H1 (cell line): ENCODE measurements at regions of chr3 and their contacts with region 1.

Region 1: DNA sequence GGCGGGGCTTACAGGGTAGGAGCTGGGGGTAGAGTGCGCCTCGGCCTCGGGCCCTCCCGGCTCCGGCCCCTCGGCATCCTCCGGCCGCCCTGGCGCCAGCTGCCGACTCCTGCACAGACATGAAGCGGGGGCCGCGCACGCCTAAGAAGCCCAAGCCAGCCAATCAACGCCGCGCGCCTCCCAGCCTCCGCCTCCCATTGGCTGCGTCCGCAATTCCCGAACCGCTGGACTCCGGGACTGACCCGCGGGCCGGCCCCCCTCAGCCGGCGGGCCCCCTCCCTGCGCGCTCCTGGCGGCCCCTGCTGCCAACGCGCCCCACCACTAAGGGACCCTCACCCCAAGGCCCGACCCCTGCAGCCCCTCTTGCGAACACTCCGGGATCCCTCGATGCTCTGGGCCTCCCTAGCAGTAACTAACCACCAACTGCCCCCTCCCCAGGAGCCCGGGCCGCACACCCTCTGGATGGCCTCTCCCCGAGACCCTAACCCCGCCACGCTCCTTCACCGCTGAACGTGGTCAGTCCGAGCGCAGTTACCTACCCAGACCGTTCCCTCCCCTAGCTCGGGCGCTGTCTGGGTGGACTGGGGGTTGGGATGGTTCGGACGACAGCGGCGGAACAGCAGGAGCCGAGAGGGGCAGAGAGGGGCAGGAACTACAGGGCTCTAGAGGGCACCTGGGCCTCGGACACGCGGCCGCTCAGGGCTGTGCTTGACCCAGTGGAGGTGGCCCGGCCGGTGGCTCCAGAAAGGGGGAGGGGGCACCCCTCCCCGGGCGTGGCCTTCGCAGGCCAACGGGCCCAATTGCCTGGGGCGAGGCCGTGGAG is 5.0 kb downstream of the GATA2 start:
- DNase-seq: peak; percentile 62 to 93
- H3K4me3 ChIP-seq: peak overlapping the region; percentile 28 to 63 (median 32); a peak in 6 of 8 replicates
- H3K27ac ChIP-seq: no peak overlapping the region
- H3K4me1 ChIP-seq: peaks cover 5 to 83% (median 55%) of the 10 kb centered on the region in 4 experiments
- H3K27me3 ChIP-seq: peaks cover 89 to 100% (median 99%) of the 10 kb centered on the region in 4 experiments
- CTCF ChIP-seq: no peak
- EP300 ChIP-seq: no peak
- POLR2A ChIP-seq: no peak
- RAD21 ChIP-seq: no peak

Region 2: GRCh38 chr3:128415200-128415772 is 72.7 kb before region 1 on chr3:
- CTCF ChIA-PET with region 1: no interaction called
- POLR2A ChIA-PET with region 1: no interaction called
- DNase-seq: no peak
- H3K4me3 ChIP-seq: no peak overlapping the region
- H3K27ac ChIP-seq: no peak overlapping the region
- H3K4me1 ChIP-seq: peaks cover 0 to 21% (median 15%) of the 10 kb centered on the region in 4 experiments; a peak in 6 of 7 replicates
- H3K27me3 ChIP-seq: no peaks in the 10 kb centered on the region; a peak in 1 of 7 replicates
- CTCF ChIP-seq: no peak
- EP300 ChIP-seq: no peak
- POLR2A ChIP-seq: no peak
- RAD21 ChIP-seq: no peak

Region 3: DNA sequence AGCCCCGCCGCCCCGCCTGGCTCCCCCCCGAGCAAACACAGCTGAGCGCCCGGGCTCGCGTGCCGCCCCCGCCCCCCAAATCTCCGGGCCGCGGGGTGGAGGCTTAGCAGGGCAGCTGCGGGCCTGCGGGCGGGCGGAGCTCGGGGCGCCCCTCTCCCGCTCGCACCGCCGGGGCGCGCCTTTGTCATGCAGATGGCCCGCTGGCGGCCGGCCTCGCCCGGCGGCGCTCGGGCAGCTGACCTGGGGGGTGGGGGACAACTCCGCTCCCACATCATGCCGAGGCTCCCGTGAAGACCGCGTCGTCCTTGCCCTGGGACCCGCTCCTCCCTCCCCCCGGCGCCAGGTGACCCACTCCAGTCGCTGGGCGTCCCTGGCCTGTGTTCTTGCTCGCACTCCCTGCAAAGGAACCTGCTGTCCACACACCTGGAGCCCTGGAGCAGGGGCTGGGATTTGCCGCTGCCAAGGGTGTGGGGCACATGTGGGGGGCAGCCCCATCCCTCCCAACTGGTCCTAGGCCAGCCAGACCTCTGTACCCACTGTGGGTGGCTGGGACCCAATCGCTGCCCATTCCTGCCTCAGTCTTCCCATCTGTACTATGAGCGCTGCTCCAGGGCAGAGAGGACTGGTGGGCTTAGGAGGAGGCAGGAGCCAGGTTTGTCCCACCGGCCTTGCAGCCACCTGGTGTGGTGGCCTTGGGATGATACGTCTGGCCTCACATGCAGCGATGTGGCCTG is 54.9 kb before region 1 on chr3:
- CTCF ChIA-PET with region 1: interaction called, 38 read pairs
- POLR2A ChIA-PET with region 1: interaction called, 5 read pairs
- DNase-seq: peak in 1 of 2 experiments; percentile 75
- H3K4me3 ChIP-seq: peak overlapping the region; percentile 18 to 62 (median 32); a peak in 6 of 8 replicates
- H3K27ac ChIP-seq: no peak overlapping the region
- H3K4me1 ChIP-seq: peaks cover 6 to 40% (median 31%) of the 10 kb centered on the region in 4 experiments
- H3K27me3 ChIP-seq: peaks cover 9 to 57% (median 48%) of the 10 kb centered on the region in 4 experiments
- CTCF ChIP-seq: no peak
- EP300 ChIP-seq: no peak
- POLR2A ChIP-seq: no peak
- RAD21 ChIP-seq: no peak

Region 4: GRCh38 chr3:128464188-128464587 is 23.8 kb before region 1 on chr3:
- CTCF ChIA-PET with region 1: interaction called, 42 read pairs
- POLR2A ChIA-PET with region 1: no interaction called
- DNase-seq: no peak
- H3K4me3 ChIP-seq: no peak overlapping the region
- H3K27ac ChIP-seq: no peak overlapping the region
- H3K4me1 ChIP-seq: peaks cover 0 to 2% (median 0%) of the 10 kb centered on the region in 4 experiments; a peak in 2 of 7 replicates
- H3K27me3 ChIP-seq: peaks cover 0 to 13% (median 11%) of the 10 kb centered on the region in 4 experiments; a peak in 3 of 7 replicates
- CTCF ChIP-seq: peak in 2 of 3 experiments; percentile 29 to 35; a peak in 1 of 4 replicates
- EP300 ChIP-seq: no peak
- POLR2A ChIP-seq: no peak
- RAD21 ChIP-seq: peak; percentile 21 to 45; a peak in 2 of 4 replicates

Region 5: GRCh38 chr3:128515967-128516366 is 27.9 kb after region 1 on chr3:
- CTCF ChIA-PET with region 1: no interaction called
- POLR2A ChIA-PET with region 1: no interaction called
- DNase-seq: no peak
- H3K4me3 ChIP-seq: no peak overlapping the region
- H3K27ac ChIP-seq: no peak overlapping the region
- H3K4me1 ChIP-seq: no peaks in the 10 kb centered on the region
- H3K27me3 ChIP-seq: no peaks in the 10 kb centered on the region
- CTCF ChIP-seq: no peak
- EP300 ChIP-seq: no peak
- POLR2A ChIP-seq: no peak
- RAD21 ChIP-seq: no peak

Region 6: DNA sequence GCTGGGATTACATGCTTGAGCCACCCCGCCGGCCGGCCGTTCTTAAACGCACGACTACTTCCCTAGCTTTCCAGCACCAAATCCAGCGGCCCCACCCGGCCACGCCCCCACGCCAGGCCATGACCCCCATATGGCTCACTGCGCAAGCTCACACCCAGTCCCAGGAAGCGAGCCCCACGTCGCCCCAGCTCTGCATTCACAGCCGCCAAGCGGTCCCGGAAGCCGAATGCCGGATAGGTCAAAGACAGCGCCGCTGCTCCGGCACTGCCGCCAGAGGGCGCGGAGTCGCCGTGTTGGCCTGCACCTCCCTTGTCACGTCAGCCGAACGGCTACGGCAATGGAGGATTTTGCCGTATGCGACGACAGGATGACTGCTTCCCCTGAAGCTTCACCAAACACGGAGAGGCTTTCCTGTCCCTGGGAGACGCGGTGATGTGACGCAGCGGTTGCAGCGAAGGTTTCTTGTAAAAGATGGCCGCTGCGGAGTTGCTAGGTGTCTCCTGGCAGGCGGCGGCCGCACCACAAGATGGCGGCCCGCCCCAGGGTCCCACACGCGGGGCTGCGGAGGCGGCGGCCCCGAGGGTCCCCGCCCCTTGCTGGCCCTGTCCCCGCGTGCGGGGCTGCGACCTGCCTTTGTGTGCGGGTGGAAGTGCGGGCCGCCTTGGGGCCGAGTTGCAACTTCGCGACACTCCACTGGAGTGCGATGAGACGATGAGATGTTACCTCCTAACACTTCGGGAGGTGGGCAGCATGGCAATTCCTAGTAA is 192.8 kb after region 1 on chr3:
- CTCF ChIA-PET with region 1: no interaction called
- POLR2A ChIA-PET with region 1: no interaction called
- DNase-seq: peak; percentile 98 to 99
- H3K4me3 ChIP-seq: peak overlapping the region; percentile 29 to 77 (median 66)
- H3K27ac ChIP-seq: peak overlapping the region; percentile 99
- H3K4me1 ChIP-seq: peaks cover 0 to 4% (median 2%) of the 10 kb centered on the region in 4 experiments; a peak in 1 of 7 replicates
- H3K27me3 ChIP-seq: peaks cover 3 to 17% (median 12%) of the 10 kb centered on the region in 4 experiments
- CTCF ChIP-seq: peak; percentile 95 to 100 (median 99)
- EP300 ChIP-seq: peak in 1 of 2 experiments; percentile 5; a peak in 2 of 3 replicates
- POLR2A ChIP-seq: peak; percentile 78 to 91
- RAD21 ChIP-seq: peak; percentile 78 to 79